Transverse colon (tissue), 4 donors: ENCODE measurements at regions of chr5 and their contacts with region 1.

Region 1: GRCh38 chr5:34898258-34898895 is 16.9 kb downstream of the RAD1 start:
- DNase-seq: peak; percentile 62
- H3K4me3 ChIP-seq: no peak overlapping the region
- H3K27ac ChIP-seq: no peak overlapping the region
- H3K4me1 ChIP-seq: no peaks in the 10 kb centered on the region
- H3K27me3 ChIP-seq: no peaks in the 10 kb centered on the region
- CTCF ChIP-seq: peak; percentile 81 to 86 (median 84)
- EP300 ChIP-seq: no peak
- POLR2A ChIP-seq: no peak

Region 2: DNA sequence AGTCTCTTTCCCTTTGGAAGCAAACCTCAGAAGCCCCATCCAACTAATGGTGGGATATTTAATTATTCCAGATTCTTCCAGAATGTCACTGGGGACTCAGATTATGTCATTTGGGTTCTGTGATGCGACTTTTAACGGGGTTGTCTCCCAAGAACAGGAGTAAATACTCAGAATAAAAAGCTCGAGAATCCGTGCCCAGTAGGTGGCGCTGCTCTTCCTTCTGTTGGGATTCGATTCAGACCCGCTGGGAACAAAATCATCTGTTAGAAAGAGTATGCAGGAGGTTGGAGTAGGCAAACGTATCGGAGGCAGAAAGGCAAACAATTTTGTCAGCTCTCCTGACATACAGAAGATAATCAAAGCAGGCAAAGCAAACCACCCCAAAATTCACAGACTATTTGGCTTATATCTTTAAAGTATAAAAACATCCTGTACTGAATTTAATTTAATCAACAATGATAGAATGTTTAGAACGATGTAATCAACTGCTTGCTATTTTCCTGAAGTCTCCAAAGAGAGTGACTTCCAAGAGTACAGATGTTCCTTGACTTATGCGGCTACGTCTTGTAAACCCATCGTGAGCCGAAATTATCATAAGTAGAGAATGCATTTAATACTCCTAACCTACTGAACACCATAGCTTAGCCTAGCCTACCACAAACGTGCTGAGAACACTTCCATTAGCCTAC is 412.1 kb before region 1 on chr5:
- in situ Hi-C with region 1: loop called (anchors 5 to 10 kb)
- intact Hi-C with region 1: loop called (anchors 1 kb)
- DNase-seq: peak; percentile 78
- H3K4me3 ChIP-seq: no peak overlapping the region
- H3K27ac ChIP-seq: peak overlapping the region in 2 of 4 donors; percentile 0 to 7
- H3K4me1 ChIP-seq: peaks cover 0 to 18% (median 3%) of the 10 kb centered on the region in 4 donors
- H3K27me3 ChIP-seq: no peaks in the 10 kb centered on the region
- CTCF ChIP-seq: peak; percentile 74 to 86 (median 83)
- EP300 ChIP-seq: no peak
- POLR2A ChIP-seq: no peak

Region 3: GRCh38 chr5:34517249-34517648 is 381.1 kb before region 1 on chr5:
- in situ Hi-C with region 1: loop called in 2 of 4 experiments (anchors 10 kb)
- intact Hi-C with region 1: loop called (anchors 5 kb)
- DNase-seq: no peak
- H3K4me3 ChIP-seq: no peak overlapping the region
- H3K27ac ChIP-seq: no peak overlapping the region
- H3K4me1 ChIP-seq: peaks cover 0 to 2% (median 0%) of the 10 kb centered on the region in 4 donors
- H3K27me3 ChIP-seq: no peaks in the 10 kb centered on the region
- CTCF ChIP-seq: no peak
- EP300 ChIP-seq: no peak
- POLR2A ChIP-seq: no peak

Region 4: DNA sequence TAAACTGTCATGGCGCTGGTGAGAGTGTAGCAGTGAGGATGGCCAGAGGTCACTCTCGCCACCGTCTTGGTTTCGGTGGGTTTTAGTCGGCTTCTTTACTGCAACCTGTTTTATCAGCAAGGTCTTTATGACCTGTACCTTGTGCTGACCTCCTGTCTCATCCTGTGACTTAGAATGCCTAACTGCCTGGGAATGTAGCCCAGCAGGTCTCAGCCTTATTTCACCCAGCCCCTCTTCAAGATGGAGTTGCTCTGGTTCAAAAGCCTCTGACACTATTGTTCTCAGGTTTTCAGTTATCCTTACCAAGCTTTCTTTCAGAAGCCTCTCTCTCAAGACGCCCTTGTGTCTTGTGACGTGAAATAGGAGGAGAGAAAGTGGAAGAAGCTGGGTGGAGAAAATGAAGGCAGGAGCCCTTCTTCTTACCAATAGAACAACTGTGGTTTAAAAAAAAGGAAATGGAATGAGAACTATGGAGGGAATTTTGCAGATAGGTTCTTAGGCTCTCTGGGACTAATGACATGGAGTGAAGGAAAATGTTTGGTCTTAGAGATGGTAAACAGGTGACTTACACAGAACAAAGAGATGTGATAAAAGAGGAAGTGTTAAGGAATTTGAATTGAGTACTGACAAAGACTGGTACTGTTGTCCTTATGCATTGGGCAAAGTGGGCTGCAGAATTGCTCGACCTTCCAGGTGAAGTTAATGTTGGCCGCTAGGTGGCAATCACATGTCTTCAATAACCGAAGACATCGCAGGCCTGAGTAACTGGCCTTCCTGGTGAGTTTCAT is 375.6 kb before region 1 on chr5:
- in situ Hi-C with region 1: loop called in 3 of 4 experiments (anchors 10 to 25 kb)
- intact Hi-C with region 1: loop called (anchors 5 kb)
- DNase-seq: peak; percentile 69
- H3K4me3 ChIP-seq: no peak overlapping the region
- H3K27ac ChIP-seq: peak overlapping the region in 1 of 4 donors; percentile 36
- H3K4me1 ChIP-seq: peaks cover 0 to 4% (median 0%) of the 10 kb centered on the region in 4 donors
- H3K27me3 ChIP-seq: no peaks in the 10 kb centered on the region
- CTCF ChIP-seq: peak; percentile 64 to 85 (median 65)
- EP300 ChIP-seq: no peak
- POLR2A ChIP-seq: no peak

Region 5: GRCh38 chr5:34533582-34534522 is 364.5 kb before region 1 on chr5:
- in situ Hi-C with region 1: loop called in 2 of 4 experiments (anchors 10 to 25 kb)
- intact Hi-C with region 1: no loop called
- DNase-seq: no peak
- H3K4me3 ChIP-seq: no peak overlapping the region
- H3K27ac ChIP-seq: peak overlapping the region in 3 of 4 donors; percentile 33 to 64 (median 55)
- H3K4me1 ChIP-seq: peaks cover 0 to 18% (median 2%) of the 10 kb centered on the region in 4 donors
- H3K27me3 ChIP-seq: no peaks in the 10 kb centered on the region
- CTCF ChIP-seq: no peak
- EP300 ChIP-seq: no peak
- POLR2A ChIP-seq: no peak